ENCODE measurements at regions of chr10 and their contacts with region 1.

Region 1: GRCh38 chr10:56633876-56634452 is 272.9 kb upstream of the ZWINT start:
- DNase-seq: peak; percentile 98
- H3K4me3 ChIP-seq: peak overlapping the region; percentile 51
- H3K27ac ChIP-seq: peak overlapping the region; percentile 99
- H3K4me1 ChIP-seq: peaks cover 60% of the 10 kb centered on the region
- CTCF ChIP-seq: no peak

Region 2: DNA sequence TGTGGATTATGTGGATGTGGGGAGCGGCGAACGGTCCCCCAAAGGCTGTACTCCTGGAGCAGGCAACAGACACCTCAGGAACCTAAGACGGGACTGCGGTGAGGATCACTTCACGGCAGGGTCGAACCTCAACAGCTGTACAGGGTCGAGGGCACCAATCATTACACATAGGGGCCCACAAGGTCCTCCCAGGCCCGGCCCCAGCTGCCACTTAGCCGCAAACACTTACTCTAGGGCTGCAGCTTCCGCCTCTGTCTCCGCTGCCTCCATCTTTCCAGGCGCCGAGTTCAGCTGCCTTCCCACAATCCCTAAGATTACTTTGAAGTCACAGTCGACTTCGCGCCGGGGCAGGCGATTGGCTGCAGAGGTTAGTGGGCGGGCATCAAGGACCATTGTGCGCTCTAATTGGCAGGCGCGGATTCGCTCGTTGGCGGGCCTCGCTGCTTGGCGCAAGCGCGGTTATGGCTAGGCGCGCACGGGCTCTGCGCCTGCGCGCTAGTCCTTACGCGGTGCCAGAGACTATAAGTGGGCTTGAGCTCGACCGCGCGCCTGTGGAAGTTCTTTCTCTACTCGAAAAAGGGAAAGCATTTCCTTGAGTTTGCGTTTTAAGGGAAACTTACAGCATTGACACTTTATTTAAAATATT is 272.9 kb before region 1 on chr10 and contains the start of gene ZWINT:
- CTCF ChIA-PET with region 1: no interaction called
- POLR2A ChIA-PET with region 1: interaction called, 8 read pairs
- intact Hi-C with region 1: loop called (anchors 5 kb)
- DNase-seq: peak; percentile 98
- H3K4me3 ChIP-seq: peak within 1 kb of the TSS; percentile 96
- H3K27ac ChIP-seq: peak within 1 kb of the TSS; percentile 62
- H3K4me1 ChIP-seq: peaks cover 39% of the 10 kb centered on the region
- CTCF ChIP-seq: no peak
- total RNA-seq, gene ZWINT: 220 and 230 TPM in 2 replicates

Region 3: DNA sequence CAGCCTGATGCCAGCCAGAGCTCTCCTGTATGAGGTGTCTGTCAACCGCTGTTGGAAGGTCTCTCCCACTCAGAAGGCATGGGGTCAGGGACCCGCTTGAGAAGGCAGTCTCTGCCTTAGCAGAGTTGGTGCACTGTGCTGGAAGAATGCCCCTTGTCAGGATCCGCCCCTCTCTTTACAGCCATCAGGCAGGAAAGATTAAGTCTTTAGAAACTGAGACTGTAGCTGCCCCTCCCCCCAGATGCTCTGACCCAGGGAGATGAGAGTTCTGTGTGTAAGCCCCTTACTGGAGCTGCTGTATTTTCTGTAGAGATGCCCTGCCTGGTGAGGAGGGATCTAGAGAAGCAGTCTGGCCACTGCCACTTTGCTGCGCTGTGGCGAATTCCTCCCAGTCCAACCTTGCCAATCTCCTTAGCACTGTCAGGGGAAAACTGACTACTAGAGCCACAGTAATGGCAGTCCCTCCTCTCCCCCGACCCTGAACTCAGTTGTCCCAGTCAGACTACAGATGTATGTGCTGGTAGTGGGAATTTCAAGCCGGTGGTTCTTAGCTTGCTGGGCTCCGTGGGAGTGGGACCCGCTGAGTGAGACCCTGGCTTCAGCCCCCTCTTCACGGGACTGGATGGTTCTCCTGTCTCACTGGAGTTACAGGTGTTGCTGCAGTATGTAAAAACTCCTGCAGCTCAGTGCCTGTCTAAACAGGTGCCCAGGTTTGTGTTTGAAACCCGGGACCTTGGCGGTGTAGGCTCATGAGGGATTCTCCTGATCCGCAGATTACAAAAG is 12.6 kb after region 1 on chr10:
- CTCF ChIA-PET with region 1: no interaction called
- POLR2A ChIA-PET with region 1: interaction called, 11 read pairs
- intact Hi-C with region 1: no loop called
- DNase-seq: no peak
- H3K4me3 ChIP-seq: no peak overlapping the region
- H3K27ac ChIP-seq: no peak overlapping the region
- H3K4me1 ChIP-seq: no peaks in the 10 kb centered on the region
- CTCF ChIP-seq: no peak

Region 4: DNA sequence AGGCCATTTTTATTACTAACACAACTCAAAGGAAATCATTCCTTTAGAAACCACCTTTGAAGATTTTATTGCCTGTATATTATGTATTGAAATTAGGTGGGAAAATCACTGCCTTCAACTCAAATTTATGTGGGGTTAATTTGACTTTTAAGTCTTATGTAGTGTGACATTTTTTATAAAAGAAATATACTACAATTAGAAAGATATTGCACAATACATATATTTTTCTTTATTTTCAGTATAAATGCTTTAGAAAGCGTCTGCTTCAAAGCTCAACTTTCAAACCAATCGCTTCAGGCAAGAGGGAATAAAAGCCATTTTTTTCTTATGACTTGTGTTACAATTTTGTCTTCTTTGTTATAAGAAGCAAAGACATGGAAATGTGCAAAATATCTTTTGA is 64.5 kb after region 1 on chr10:
- CTCF ChIA-PET with region 1: no interaction called
- POLR2A ChIA-PET with region 1: interaction called, 11 read pairs
- intact Hi-C with region 1: no loop called
- DNase-seq: no peak
- H3K4me3 ChIP-seq: no peak overlapping the region
- H3K27ac ChIP-seq: no peak overlapping the region
- H3K4me1 ChIP-seq: no peaks in the 10 kb centered on the region
- CTCF ChIP-seq: no peak

Region 5: GRCh38 chr10:56715262-56715661 is 81.3 kb after region 1 on chr10:
- CTCF ChIA-PET with region 1: no interaction called
- POLR2A ChIA-PET with region 1: no interaction called
- intact Hi-C with region 1: loop called (anchors 2 kb)
- DNase-seq: peak; percentile 56
- H3K4me3 ChIP-seq: no peak overlapping the region
- H3K27ac ChIP-seq: peak overlapping the region; percentile 39
- H3K4me1 ChIP-seq: peaks cover 12% of the 10 kb centered on the region
- CTCF ChIP-seq: no peak

Region 6: DNA sequence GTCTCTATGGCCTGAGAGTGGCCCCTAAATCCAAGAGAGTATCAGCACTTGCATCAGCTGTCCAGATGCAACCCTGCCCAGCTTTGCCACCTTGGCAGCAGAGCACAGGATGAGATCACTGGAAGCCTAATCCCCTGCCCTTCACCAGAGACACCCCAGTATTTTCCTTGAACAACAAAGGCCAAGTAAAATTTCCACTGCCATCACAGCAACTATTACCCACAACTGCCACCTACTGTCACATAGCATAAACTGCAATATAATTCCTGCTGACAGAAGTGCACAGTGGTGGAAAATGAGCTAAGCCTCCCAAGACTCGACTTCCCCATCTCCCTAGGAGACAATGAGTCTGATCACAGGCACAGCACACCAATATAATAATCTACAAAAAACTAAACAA is 189.9 kb after region 1 on chr10:
- CTCF ChIA-PET with region 1: no interaction called
- POLR2A ChIA-PET with region 1: interaction called, 3 read pairs
- intact Hi-C with region 1: loop called (anchors 1 kb)
- DNase-seq: peak; percentile 64
- H3K4me3 ChIP-seq: no peak overlapping the region
- H3K27ac ChIP-seq: no peak overlapping the region
- H3K4me1 ChIP-seq: peaks cover 3% of the 10 kb centered on the region
- CTCF ChIP-seq: peak; percentile 84

Region 7: GRCh38 chr10:57593983-57594573 is 960.1 kb after region 1 on chr10:
- CTCF ChIA-PET with region 1: no interaction called
- POLR2A ChIA-PET with region 1: no interaction called
- intact Hi-C with region 1: no loop called
- DNase-seq: peak; percentile 1
- H3K4me3 ChIP-seq: no peak overlapping the region
- H3K27ac ChIP-seq: no peak overlapping the region
- H3K4me1 ChIP-seq: no peaks in the 10 kb centered on the region
- CTCF ChIP-seq: peak; percentile 62

Measured in OCI-LY7 (cell line).